ENCODE measurements at regions of chr13 and their contacts with region 1.

Region 1: GRCh38 chr13:41193919-41194824 is at the start of gene KBTBD7:
- DNase-seq: peak; percentile 97
- ATAC-seq: peak; percentile 99 to 100
- total RNA-seq, gene KBTBD7: 4.8 to 6.7 TPM

Region 2: GRCh38 chr13:41132512-41133152 is 61.5 kb before region 1 on chr13 and contains the start of gene KBTBD6:
- intact Hi-C with region 1: loop called (anchors 2 to 10 kb)
- DNase-seq: peak; percentile 98
- ATAC-seq: peak; percentile 98 to 99
- total RNA-seq, gene KBTBD6: 7.2 to 9.3 TPM

Region 3: DNA sequence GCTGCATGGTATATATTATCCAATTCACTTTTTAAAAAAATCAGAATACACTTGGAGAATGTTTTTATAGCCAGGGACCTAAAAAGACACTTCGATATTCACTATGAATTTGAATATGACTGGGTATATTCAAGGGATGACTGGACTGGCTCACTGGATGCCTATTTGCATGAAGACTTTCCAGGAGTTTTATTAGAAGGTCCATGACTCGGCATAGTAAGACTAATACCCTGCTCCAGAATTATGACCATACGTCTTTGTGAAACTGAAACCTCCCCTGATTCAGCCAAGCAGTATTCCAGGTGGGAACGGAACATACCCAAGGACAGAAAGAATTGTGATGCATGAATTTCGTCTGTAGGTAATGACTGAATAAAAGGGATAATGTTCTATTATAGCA is 1583.3 kb after region 1 on chr13:
- intact Hi-C with region 1: no loop called
- DNase-seq: no peak
- ATAC-seq: no peak

Measured in left cardiac atrium (tissue), 4 donors.